ENCODE measurements at regions of chr12 and their contacts with region 1.

Region 1: DNA sequence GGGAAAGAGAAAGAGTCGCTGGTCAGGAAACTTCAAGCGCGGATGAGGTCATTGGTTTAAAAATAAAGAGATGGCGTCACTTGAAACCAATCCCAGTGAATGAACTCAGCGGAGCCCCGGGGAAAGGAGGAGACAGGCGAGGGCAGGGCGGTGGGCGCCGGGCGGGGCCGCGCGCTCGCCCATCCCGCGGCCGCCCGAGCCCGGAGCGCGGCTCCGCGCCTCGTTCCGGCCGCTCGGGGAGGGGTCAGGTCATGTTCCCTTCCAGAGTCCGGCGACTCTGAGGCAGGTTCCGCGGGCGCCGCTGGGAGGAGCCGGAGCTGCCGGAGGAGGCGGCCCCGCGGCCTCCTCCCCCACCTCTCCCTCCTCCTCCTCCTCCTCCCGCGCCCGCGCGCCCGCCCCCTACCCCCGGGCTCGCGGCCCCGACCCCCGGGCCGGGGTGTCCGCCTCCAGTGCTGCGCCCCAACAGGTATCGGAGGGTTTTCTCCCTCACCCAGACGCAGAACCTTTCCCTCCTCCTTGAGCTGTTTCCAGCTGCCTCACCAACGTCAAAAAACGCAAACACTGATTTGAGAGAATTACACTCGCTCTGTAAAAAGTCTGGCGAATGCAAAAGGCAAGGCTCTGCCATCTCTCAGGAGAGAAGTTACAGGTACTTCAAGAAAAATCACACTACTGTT is at the start of gene DUSP16:
- DNase-seq: peak; percentile 86
- ATAC-seq: peak; percentile 88
- H3K4me3 Mint-ChIP-seq: peak within 1 kb of the TSS; percentile 84
- H3K27ac Mint-ChIP-seq: peak within 1 kb of the TSS; percentile 94
- H3K4me1 Mint-ChIP-seq: peaks cover 14% of the 10 kb centered on the region
- H3K27me3 Mint-ChIP-seq: no peaks in the 10 kb centered on the region
- total RNA-seq, gene DUSP16: 32.2 to 38.1 TPM

Region 2: GRCh38 chr12:12224240-12224940 is 338.3 kb before region 1 on chr12:
- POLR2A ChIA-PET with region 1: no interaction called
- DNase-seq: no peak
- ATAC-seq: no peak
- H3K4me3 Mint-ChIP-seq: no peak overlapping the region
- H3K27ac Mint-ChIP-seq: no peak overlapping the region
- H3K4me1 Mint-ChIP-seq: no peaks in the 10 kb centered on the region
- H3K27me3 Mint-ChIP-seq: peaks cover 40% of the 10 kb centered on the region

Region 3: DNA sequence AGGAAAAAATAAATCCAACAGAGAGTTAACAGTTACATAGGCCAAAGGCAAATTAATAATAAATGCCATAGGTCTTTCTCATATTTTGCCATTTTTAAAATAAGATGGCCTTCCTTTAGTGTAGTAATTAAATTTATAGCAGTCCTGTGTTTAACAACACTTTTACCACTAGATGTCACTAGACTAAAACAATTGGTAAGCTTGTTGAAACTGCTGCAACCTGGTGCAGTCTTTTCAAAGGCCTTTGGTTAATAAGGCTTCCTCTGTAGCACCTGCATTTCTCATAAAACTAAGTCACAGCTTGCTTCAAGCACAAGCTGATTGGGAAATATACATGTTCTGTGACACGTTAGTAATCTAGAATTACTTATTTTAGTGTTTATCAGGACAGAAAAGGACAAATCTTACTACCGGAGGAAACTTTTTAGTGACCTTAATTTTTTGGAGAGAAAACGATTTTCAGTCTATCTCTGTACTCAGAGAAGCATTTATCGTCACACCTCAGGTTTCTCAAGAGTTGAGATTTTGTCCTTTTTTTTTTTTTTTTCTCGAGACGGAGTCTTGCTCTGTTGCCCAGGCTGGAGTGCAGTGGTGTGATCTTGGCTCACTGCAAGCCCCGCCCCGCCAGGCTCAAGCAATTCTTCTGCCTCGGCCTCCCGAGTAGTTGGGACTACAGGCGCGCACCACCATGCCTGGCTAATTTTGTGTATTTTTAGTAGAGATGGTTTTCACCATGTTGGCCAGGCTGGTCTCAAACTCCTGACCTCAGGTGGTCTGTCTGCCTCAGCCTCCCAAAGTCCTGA is 185.9 kb before region 1 on chr12:
- POLR2A ChIA-PET with region 1: interaction called, 10 read pairs
- DNase-seq: no peak
- ATAC-seq: peak; percentile 68
- H3K4me3 Mint-ChIP-seq: no peak overlapping the region
- H3K27ac Mint-ChIP-seq: peak overlapping the region; percentile 39
- H3K4me1 Mint-ChIP-seq: peaks cover 20% of the 10 kb centered on the region
- H3K27me3 Mint-ChIP-seq: no peaks in the 10 kb centered on the region

Region 4: GRCh38 chr12:12474931-12475795 is 87.6 kb before region 1 on chr12:
- POLR2A ChIA-PET with region 1: interaction called, 11 read pairs
- DNase-seq: no peak
- ATAC-seq: peak; percentile 92
- H3K4me3 Mint-ChIP-seq: peak overlapping the region; percentile 52
- H3K27ac Mint-ChIP-seq: peak overlapping the region; percentile 85
- H3K4me1 Mint-ChIP-seq: peaks cover 30% of the 10 kb centered on the region
- H3K27me3 Mint-ChIP-seq: no peaks in the 10 kb centered on the region

Region 5: GRCh38 chr12:12716793-12717585 is 154.3 kb after region 1 on chr12 and contains the start of gene CDKN1B:
- POLR2A ChIA-PET with region 1: interaction called, 10 read pairs
- DNase-seq: peak; percentile 88
- ATAC-seq: peak; percentile 55
- H3K4me3 Mint-ChIP-seq: peak within 1 kb of the TSS; percentile 96
- H3K27ac Mint-ChIP-seq: peak within 1 kb of the TSS; percentile 98
- H3K4me1 Mint-ChIP-seq: peaks cover 41% of the 10 kb centered on the region
- H3K27me3 Mint-ChIP-seq: no peaks in the 10 kb centered on the region
- total RNA-seq, gene CDKN1B: 135 to 136 TPM

Region 6: GRCh38 chr12:13038491-13039161 is 475.9 kb after region 1 on chr12:
- POLR2A ChIA-PET with region 1: no interaction called
- DNase-seq: no peak
- ATAC-seq: no peak
- H3K4me3 Mint-ChIP-seq: no peak overlapping the region
- H3K27ac Mint-ChIP-seq: no peak overlapping the region
- H3K4me1 Mint-ChIP-seq: no peaks in the 10 kb centered on the region
- H3K27me3 Mint-ChIP-seq: peaks cover 22% of the 10 kb centered on the region

Measured in activated naive CD8-positive, alpha-beta T cell treated with anti-CD3 and anti-CD28 coated beads, Interleukin-2, amount 10 ng/mL, durations not matched to agents 7 days and 5 days (primary cell).